ENCODE measurements at regions of chr6 and their contacts with region 1.

Region 1: DNA sequence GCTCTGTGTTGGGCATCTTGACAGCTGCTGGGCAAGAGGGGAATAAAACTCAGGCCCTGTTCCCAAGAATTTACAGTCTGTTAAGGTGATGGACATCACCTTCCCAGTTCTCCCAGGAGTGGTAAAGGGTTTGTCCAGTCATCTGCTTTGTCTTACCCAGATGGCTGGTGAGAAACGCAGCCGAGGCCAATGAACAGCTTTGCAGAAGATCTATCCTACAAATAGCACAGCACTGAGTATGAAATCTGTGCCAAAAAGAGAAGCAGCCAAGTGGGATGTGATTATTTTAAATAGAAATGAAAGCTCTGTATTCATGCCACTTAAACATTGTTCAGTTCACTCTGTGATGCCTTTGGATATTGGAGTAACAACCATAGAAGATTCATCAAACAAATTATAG is 132.7 kb upstream of the SLC22A16 start:
- DNase-seq: peak in 7 of 10 donors; percentile 37 to 72 (median 62)
- H3K4me3 ChIP-seq: peak overlapping the region in 1 of 59 donors; percentile 15
- H3K27ac ChIP-seq: peak overlapping the region; percentile 31 to 98 (median 91)
- H3K27me3 ChIP-seq: no peaks in the 10 kb centered on the region
- CTCF ChIP-seq: no peak

Region 2: DNA sequence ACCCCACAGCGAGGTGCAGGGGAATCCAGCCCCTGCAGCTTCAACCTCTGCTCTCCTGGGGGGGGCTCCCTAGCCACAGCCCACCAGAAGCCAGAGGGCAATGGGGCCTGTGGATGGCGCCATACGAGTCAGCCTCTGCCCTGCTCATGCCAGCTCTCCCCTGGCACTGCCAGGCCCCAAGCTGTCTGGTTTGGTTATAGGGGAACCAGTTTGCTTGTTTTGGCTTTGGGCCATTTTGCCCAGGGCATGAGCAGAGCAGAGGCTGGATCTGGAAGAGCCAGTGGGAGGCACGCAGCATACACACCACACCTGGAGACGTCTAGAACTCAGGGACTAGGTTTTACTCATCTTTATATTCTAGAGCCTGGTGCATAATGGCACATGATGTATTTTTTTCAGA is 66.0 kb before region 1 on chr6:
- intact Hi-C with region 1: loop called (anchors 5 kb)
- DNase-seq: peak in 8 of 10 donors; percentile 58 to 72 (median 67)
- H3K4me3 ChIP-seq: peak overlapping the region in 13 of 59 donors; percentile 4 to 54 (median 45)
- H3K27ac ChIP-seq: peak overlapping the region; percentile 67 to 100 (median 99)
- H3K27me3 ChIP-seq: no peaks in the 10 kb centered on the region
- CTCF ChIP-seq: peak in 17 of 56 donors; percentile 3 to 47 (median 23)

Region 3: DNA sequence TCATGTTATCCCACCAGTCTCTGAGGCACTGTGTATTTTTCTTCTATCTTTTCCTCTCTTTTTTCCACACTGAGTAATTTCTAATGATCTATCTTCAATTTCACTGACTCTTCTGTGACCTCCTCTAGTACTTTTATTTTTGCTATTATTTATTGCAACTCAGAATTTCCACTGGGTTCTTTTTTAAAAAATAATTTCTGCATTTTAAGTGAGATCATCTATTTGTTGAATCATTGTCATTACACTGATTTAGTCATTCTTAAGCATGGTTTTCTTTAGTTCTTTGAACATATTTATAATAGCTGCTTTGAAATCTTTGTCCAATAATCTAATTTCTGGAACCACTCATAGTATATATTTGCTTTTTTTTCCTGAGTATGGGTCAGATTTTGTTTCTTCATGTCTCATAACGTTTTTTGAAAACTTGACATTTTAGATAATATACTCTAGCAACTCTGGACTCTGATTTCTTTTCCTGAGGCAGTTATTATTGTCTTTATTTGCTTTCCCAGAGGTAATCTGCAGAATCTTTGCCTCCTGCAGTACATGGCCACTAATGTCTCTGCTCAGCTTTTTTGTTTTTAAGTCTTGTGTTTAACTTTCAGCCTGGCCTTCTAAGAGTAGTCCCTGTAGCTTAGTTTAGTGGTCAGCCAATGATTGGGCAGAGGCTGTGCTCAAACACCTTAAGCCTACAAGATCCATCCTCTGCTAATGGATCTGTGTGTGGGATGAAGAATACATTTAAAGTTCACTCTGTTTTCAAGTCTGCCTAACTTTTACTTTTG is 35.8 kb before region 1 on chr6:
- intact Hi-C with region 1: no loop called
- DNase-seq: no peak
- H3K4me3 ChIP-seq: no peak overlapping the region
- H3K27ac ChIP-seq: no peak overlapping the region
- H3K27me3 ChIP-seq: no peaks in the 10 kb centered on the region
- CTCF ChIP-seq: no peak